ENCODE measurements at regions of chr11 and their contacts with region 1.

Region 1: GRCh38 chr11:65506770-65507505 is 8.1 kb downstream of the MALAT1 start:
- DNase-seq: no peak
- ATAC-seq: peak; percentile 45 to 70
- H3K4me3 ChIP-seq: peak overlapping the region; percentile 90
- H3K27ac ChIP-seq: peak overlapping the region; percentile 89 to 100
- H3K4me1 ChIP-seq: peaks cover 22% of the 10 kb centered on the region
- CTCF ChIP-seq: no peak
- EP300 ChIP-seq: no peak
- POLR2A ChIP-seq: peak; percentile 20; the same call in 1 of the 2 replicates
- RAD21 ChIP-seq: no peak

Region 2: GRCh38 chr11:65274735-65275682 is 231.9 kb before region 1 on chr11:
- CTCF ChIA-PET with region 1: interaction called, 10 read pairs
- POLR2A ChIA-PET with region 1: interaction called, 10 read pairs
- DNase-seq: peak; percentile 66 to 85
- ATAC-seq: peak; percentile 88 to 89
- H3K4me3 ChIP-seq: no peak overlapping the region
- H3K27ac ChIP-seq: peak overlapping the region; percentile 23 to 69; a peak in 4 of 6 replicates
- H3K4me1 ChIP-seq: peaks cover 48% of the 10 kb centered on the region
- CTCF ChIP-seq: peak; percentile 96
- EP300 ChIP-seq: no peak
- POLR2A ChIP-seq: no peak
- RAD21 ChIP-seq: peak; percentile 99

Region 3: GRCh38 chr11:65375012-65375411 is 131.9 kb before region 1 on chr11:
- CTCF ChIA-PET with region 1: interaction called, 63 read pairs
- POLR2A ChIA-PET with region 1: interaction called, 8 read pairs
- DNase-seq: no peak
- ATAC-seq: no peak
- H3K4me3 ChIP-seq: no peak overlapping the region
- H3K27ac ChIP-seq: peak overlapping the region in 1 of 2 experiments; percentile 27; a peak in 2 of 6 replicates
- H3K4me1 ChIP-seq: peaks cover 44% of the 10 kb centered on the region
- CTCF ChIP-seq: no peak
- EP300 ChIP-seq: no peak
- POLR2A ChIP-seq: no peak
- RAD21 ChIP-seq: no peak

Region 4: DNA sequence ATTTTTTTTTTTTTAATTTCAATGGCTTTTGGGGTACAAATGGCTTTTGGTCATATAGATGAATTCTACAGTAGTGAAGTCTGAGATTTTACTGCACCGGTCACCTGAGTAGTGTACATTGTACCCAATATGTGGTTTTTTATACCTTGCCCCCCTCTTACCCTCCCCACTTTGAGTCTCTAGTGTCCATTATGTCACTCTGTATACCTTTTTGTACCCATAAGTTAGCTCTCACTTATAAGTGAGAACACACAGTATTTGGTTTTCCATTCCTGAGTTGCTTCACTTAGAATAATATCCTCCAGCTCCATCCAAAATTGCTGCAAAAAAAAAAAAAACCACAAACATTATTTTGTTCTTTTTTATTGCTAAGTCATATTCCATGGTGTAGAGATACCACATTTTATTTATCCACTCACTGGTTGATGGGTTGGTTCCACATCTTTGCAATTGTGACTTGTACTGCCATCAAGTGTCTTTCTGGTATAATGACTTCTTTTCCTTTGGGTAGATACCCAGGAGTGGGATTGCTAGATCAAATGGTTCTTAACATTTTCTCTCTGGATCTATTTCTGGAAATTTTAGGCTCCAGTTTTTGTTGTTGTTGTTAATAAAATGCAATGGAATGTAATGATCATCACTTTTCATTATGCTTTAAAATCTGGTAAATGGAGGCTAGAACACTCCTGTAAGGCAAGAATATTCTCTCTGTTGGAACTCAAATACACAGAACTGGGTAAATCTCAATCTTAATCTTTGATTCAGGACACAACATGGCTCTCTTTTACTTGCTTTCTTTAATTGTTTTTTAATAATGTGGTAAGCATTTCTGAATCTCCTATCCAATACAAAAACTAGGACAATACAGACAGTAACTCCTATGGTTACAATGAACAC is 74.0 kb before region 1 on chr11:
- CTCF ChIA-PET with region 1: interaction called, 9 read pairs
- POLR2A ChIA-PET with region 1: interaction called, 756 read pairs
- DNase-seq: peak in 1 of 2 experiments; percentile 75
- ATAC-seq: no peak
- H3K4me3 ChIP-seq: no peak overlapping the region
- H3K27ac ChIP-seq: peak overlapping the region; percentile 43 to 55; a peak in 4 of 6 replicates
- H3K4me1 ChIP-seq: peaks cover 85% of the 10 kb centered on the region
- CTCF ChIP-seq: peak; percentile 52
- EP300 ChIP-seq: no peak
- POLR2A ChIP-seq: no peak
- RAD21 ChIP-seq: peak; percentile 58 to 59

Region 5: DNA sequence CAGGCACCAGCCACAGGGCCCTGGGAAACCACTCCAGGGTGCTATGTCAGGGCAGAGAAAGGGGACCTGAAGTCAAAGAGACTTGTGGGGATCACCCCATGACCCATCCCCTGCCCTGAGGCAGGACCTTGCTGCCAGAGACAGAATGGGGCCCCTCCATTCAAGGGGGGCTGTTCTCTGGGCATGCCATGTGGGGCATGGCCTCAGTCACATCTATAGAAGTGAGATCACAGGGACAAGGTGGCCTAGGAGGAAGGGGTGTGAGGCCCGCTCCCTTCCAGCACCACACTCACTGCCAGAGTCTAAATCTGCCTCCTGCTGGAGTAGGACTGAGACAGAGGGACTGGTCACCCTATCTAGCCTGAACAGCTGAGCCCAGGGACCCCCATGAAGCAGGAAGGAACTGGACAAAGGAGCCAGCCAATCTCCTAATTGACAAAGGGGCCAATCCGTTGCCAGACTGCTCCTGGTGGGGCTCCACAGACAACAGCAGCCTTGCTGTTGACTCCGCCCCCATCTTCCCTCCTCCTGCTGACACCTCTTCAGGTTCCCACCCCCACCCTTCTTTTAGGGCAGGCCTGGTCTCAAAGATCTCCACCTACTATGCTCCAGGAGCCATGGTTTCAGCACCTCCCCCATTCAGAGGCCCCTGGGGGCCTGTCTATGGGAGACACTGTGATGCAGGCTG is 58.4 kb before region 1 on chr11:
- CTCF ChIA-PET with region 1: interaction called, 36 read pairs
- POLR2A ChIA-PET with region 1: interaction called, 68 read pairs
- DNase-seq: peak in 1 of 2 experiments; percentile 64
- ATAC-seq: peak; percentile 6 to 24; a peak in 5 of 6 replicates
- H3K4me3 ChIP-seq: no peak overlapping the region
- H3K27ac ChIP-seq: peak overlapping the region in 1 of 2 experiments; percentile 76; a peak in 3 of 6 replicates
- H3K4me1 ChIP-seq: peaks cover 71% of the 10 kb centered on the region
- CTCF ChIP-seq: no peak
- EP300 ChIP-seq: no peak
- POLR2A ChIP-seq: no peak
- RAD21 ChIP-seq: no peak

Region 6: DNA sequence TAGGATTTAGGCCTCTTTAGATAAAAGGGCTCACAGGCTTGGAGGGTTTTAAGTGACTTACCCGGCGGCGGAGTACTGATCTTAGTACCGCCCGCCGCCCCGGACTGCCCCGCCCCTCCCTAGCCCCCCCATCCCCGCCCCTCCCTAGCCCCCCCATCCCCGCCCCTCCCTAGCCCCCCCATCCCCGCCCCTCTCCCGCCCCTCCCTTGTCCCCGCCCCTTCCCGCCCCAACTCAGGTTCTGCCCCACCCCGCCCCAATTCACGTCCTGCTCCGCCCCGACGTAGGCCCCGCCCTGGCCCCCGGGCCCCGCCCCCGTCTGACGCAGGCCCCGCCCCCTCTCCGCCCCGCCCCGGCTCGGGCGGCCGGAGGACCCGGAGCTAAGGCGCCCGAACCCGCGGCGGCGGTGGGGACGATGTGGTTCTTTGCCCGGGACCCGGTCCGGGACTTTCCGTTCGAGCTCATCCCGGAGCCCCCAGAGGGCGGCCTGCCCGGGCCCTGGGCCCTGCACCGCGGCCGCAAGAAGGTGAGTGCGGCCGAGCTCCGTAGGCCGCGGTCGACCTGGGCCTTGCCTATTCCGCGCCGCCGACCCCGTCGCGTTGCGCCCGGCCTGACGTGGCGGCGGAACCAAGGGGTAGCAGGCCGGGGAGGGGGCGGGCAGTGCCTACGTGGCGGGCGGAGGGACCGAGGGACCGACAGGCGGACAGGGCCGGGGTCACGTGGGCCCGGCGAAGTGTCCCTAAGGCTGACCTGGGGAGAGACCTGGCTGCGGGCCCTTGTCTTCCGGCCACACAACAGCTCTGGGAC is 18.0 kb after region 1 on chr11 and contains the start of gene SCYL1:
- CTCF ChIA-PET with region 1: interaction called, 36 read pairs
- POLR2A ChIA-PET with region 1: interaction called, 4 read pairs
- DNase-seq: peak; percentile 53 to 81
- ATAC-seq: peak; percentile 77 to 80
- H3K4me3 ChIP-seq: peak within 1 kb of the TSS; percentile 94
- H3K27ac ChIP-seq: peak within 1 kb of the TSS; percentile 90 to 99
- H3K4me1 ChIP-seq: peaks cover 18% of the 10 kb centered on the region
- CTCF ChIP-seq: no peak
- EP300 ChIP-seq: no peak
- POLR2A ChIP-seq: peak; percentile 44; the same call in 1 of the 2 replicates
- RAD21 ChIP-seq: no peak
- polyA plus RNA-seq, gene SCYL1: 30.8 and 33.6 TPM in 2 replicates